Mammary epithelial cell (primary cell): ENCODE measurements at regions of chr22 and their contacts with region 1.

Region 1: GRCh38 chr22:37910890-37911743 is 5.0 kb downstream of the MICALL1 start:
- DNase-seq: no peak
- H3K4me3 ChIP-seq: peak overlapping the region in 1 of 3 experiments; percentile 33
- H3K27ac ChIP-seq: no peak overlapping the region
- H3K4me1 ChIP-seq: peaks cover 46% of the 10 kb centered on the region
- H3K27me3 ChIP-seq: no peaks in the 10 kb centered on the region
- CTCF ChIP-seq: no peak

Region 2: GRCh38 chr22:37862570-37863325 is 48.4 kb before region 1 on chr22:
- CTCF ChIA-PET with region 1: interaction called, 12 read pairs
- dilution Hi-C with region 1: no loop called
- in situ Hi-C with region 1: no loop called
- intact Hi-C with region 1: no loop called
- DNase-seq: no peak
- H3K4me3 ChIP-seq: no peak overlapping the region
- H3K27ac ChIP-seq: no peak overlapping the region
- H3K4me1 ChIP-seq: no peaks in the 10 kb centered on the region
- H3K27me3 ChIP-seq: no peaks in the 10 kb centered on the region
- CTCF ChIP-seq: no peak